ENCODE measurements at regions of chr7 and their contacts with region 1.

Region 1: DNA sequence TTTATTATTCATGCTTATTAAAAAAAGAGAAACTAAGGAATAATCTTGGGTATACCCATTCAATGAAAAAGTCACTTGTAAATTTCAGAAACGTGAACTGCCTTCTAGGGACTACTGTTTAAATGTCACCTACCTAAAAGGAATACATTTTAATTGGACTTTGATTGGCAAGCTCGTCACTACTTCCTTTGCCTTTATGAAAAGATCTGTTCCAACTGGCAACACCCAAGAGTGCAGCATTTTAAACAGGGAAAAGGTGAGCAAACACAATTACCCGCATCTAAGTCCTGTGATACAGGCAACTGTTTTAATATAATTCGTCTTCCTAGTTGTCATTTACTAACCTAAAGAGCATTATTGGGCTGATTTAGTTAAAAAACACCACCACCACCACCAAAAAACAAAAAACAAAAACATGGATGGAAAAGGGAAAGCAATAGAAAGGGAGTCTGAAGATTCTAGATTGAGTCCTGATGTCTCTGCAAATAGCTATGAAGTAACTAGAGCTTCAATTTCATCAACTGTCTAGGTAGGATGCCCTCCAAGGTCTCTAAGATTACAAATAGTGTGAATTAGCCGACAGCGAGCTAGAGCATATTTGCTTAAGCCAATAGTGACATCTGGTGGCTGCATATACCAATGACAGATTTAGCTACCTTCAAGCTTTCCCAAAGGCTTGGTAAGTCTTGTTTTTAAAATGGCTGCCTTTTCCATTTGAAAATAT is 33.8 kb upstream of the ICA1 start:
- DNase-seq: peak; percentile 70
- H3K4me3 ChIP-seq: no peak overlapping the region
- H3K27ac ChIP-seq: no peak overlapping the region
- H3K4me1 ChIP-seq: no peaks in the 10 kb centered on the region
- H3K27me3 ChIP-seq: no peaks in the 10 kb centered on the region
- CTCF ChIP-seq: peak; percentile 79 to 81

Region 2: GRCh38 chr7:7566651-7567611 is 728.9 kb before region 1 on chr7 and contains the start of gene MIOS:
- CTCF ChIA-PET with region 1: no interaction called
- dilution Hi-C with region 1: no loop called
- in situ Hi-C with region 1: no loop called
- intact Hi-C with region 1: loop called (anchors 10 kb)
- DNase-seq: peak; percentile 73
- H3K4me3 ChIP-seq: peak within 1 kb of the TSS; percentile 54 to 85 (median 70)
- H3K27ac ChIP-seq: peak within 1 kb of the TSS; percentile 69
- H3K4me1 ChIP-seq: peaks cover 39% of the 10 kb centered on the region
- H3K27me3 ChIP-seq: no peaks in the 10 kb centered on the region
- CTCF ChIP-seq: no peak
- total RNA-seq, gene MIOS: 27.5 to 36.8 TPM

Region 3: GRCh38 chr7:8035647-8036518 is 259.9 kb before region 1 on chr7:
- CTCF ChIA-PET with region 1: no interaction called
- dilution Hi-C with region 1: no loop called
- in situ Hi-C with region 1: no loop called
- intact Hi-C with region 1: loop called (anchors 10 kb)
- DNase-seq: peak; percentile 37
- H3K4me3 ChIP-seq: no peak overlapping the region
- H3K27ac ChIP-seq: no peak overlapping the region
- H3K4me1 ChIP-seq: peaks cover 5% of the 10 kb centered on the region
- H3K27me3 ChIP-seq: no peaks in the 10 kb centered on the region
- CTCF ChIP-seq: peak; percentile 54 to 65

Region 4: DNA sequence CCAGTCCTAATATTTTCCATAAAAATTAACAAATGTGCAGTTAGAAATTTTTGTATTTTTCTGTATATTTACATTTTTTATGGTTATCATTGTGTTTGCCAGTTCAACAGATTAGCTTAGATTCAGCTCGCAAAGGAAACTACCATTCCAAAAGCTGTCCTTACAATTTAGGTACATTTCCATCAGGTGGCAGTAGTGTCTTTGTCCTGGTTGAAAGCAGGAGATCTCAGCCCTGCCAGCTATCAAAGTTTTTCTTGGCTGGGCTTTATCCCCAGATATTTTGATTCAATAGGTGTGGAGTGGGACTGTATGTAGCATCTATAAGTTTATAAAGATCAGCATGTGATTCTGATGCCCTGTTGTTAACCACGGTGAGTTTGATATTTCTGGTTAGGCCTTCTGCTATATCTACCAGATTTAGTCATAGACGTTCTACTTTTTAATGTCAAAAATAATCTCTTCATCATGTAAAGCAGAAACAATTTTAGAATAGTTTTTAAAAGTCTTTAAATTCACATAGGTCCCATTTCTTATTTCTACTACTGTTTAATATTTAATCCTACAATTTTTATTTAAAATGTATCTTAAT is 18.3 kb before region 1 on chr7:
- CTCF ChIA-PET with region 1: interaction called, 12 read pairs
- dilution Hi-C with region 1: no loop called
- in situ Hi-C with region 1: no loop called
- intact Hi-C with region 1: loop called (anchors 1 kb)
- DNase-seq: peak; percentile 19
- H3K4me3 ChIP-seq: no peak overlapping the region
- H3K27ac ChIP-seq: no peak overlapping the region
- H3K4me1 ChIP-seq: no peaks in the 10 kb centered on the region
- H3K27me3 ChIP-seq: peaks cover 2% of the 10 kb centered on the region
- CTCF ChIP-seq: peak; percentile 18 to 41

Region 5: GRCh38 chr7:8325063-8325462 is 29.3 kb after region 1 on chr7:
- CTCF ChIA-PET with region 1: no interaction called
- dilution Hi-C with region 1: no loop called
- in situ Hi-C with region 1: no loop called
- intact Hi-C with region 1: no loop called
- DNase-seq: peak; percentile 20
- H3K4me3 ChIP-seq: no peak overlapping the region
- H3K27ac ChIP-seq: no peak overlapping the region
- H3K4me1 ChIP-seq: no peaks in the 10 kb centered on the region
- H3K27me3 ChIP-seq: no peaks in the 10 kb centered on the region
- CTCF ChIP-seq: no peak